ENCODE measurements at regions of chr6 and their contacts with region 1.

Region 1: GRCh38 chr6:32868257-32868788 is 14.3 kb downstream of the PSMB9 start:
- DNase-seq: peak; percentile 55 to 67
- H3K4me3 ChIP-seq: no peak overlapping the region
- H3K27ac ChIP-seq: no peak overlapping the region
- H3K4me1 ChIP-seq: no peaks in the 10 kb centered on the region
- H3K27me3 ChIP-seq: no peaks in the 10 kb centered on the region
- CTCF ChIP-seq: peak; percentile 95

Region 2: GRCh38 chr6:32244946-32245398 is 623.4 kb before region 1 on chr6:
- CTCF ChIA-PET with region 1: no interaction called
- POLR2A ChIA-PET with region 1: no interaction called
- intact Hi-C with region 1: no loop called
- DNase-seq: peak in 1 of 2 experiments; percentile 71
- H3K4me3 ChIP-seq: no peak overlapping the region
- H3K27ac ChIP-seq: no peak overlapping the region
- H3K4me1 ChIP-seq: no peaks in the 10 kb centered on the region
- H3K27me3 ChIP-seq: peaks cover 23% of the 10 kb centered on the region
- CTCF ChIP-seq: peak; percentile 95

Region 3: DNA sequence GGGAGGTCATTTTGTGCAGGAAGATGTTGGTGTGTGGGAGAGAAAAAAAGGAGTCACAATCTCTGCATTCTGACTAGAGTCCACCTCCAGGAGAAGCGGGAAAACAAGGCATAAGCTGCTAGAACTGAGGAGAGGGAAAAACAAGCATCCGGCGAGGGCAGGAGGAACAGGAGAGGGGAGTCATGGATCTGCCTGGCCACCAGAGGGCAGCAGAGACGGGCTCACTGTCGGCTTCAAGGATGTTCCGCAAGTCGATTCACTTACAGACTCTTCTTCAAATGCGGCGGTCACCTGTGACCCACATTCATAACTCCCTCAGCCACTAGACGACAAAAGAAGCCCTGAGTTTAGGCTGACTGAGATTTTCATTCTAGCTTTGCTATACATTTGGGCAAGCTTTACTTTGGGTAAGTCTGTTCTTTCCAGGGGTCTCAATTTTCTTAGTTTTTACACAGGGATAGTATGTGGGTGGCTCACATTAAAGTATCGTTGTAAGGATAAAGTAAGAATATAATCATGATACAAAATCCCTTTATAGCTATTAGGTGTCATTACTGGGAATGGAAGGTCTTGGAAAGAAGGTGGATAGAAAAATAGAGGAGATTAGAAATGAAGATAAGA is 454.8 kb before region 1 on chr6:
- CTCF ChIA-PET with region 1: no interaction called
- POLR2A ChIA-PET with region 1: no interaction called
- intact Hi-C with region 1: loop called (anchors 2 kb)
- DNase-seq: peak; percentile 38 to 75
- H3K4me3 ChIP-seq: no peak overlapping the region
- H3K27ac ChIP-seq: no peak overlapping the region
- H3K4me1 ChIP-seq: no peaks in the 10 kb centered on the region
- H3K27me3 ChIP-seq: peaks cover 44% of the 10 kb centered on the region
- CTCF ChIP-seq: peak; percentile 88

Region 4: GRCh38 chr6:32432050-32432450 is 436.3 kb before region 1 on chr6:
- CTCF ChIA-PET with region 1: no interaction called
- POLR2A ChIA-PET with region 1: no interaction called
- intact Hi-C with region 1: loop called (anchors 5 kb)
- DNase-seq: no peak
- H3K4me3 ChIP-seq: no peak overlapping the region
- H3K27ac ChIP-seq: no peak overlapping the region
- H3K4me1 ChIP-seq: no peaks in the 10 kb centered on the region
- H3K27me3 ChIP-seq: peaks cover 8% of the 10 kb centered on the region; the same call in 1 of the 2 replicates
- CTCF ChIP-seq: peak; percentile 69

Region 5: DNA sequence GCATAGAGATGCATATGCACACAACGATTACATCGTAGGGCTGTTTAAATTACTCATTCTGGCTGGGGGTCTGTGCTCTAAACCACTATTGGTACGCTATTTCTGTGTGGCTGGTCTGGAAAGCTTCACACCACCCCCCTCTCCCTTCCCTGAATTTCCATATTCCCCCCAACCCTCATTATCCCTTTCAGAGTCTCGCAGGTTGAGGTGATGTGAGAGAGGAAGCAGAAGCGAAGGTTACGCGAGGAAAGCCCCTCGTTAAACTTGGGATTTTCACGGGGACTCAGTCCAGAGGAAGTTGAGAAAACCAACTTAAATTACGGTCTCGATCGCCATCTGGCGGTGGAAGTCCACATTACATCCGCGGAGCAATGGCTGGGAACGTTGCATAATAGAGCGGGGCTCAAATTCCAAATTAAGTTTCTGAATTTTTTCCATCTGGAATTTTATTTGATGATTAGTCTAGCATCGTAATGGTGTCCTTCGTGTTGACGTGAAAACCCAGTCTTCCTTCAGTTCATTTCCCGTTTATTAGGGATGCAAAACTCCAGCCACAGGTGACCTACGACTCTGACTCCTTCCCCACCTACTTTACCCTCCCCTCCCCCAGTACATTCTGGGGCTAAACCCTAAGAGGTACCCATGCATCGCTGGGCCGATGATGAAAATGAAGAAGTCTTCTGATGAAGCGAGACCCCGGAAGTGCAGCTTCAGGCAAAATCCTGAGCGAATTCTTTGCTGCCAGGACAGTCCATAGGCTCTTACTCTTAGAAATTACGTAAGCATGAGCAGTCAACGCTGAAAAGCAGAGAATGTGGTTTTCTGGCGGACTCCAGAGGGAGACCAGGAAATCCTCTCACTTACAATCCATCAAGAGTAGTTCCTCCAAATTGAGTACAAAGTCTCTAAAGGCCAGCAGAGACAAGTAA is 71.2 kb before region 1 on chr6:
- CTCF ChIA-PET with region 1: interaction called, 4 read pairs
- POLR2A ChIA-PET with region 1: no interaction called
- intact Hi-C with region 1: loop called (anchors 10 kb)
- DNase-seq: peak; percentile 51 to 64
- H3K4me3 ChIP-seq: peak overlapping the region; percentile 30; the same call in 1 of the 2 replicates
- H3K27ac ChIP-seq: no peak overlapping the region
- H3K4me1 ChIP-seq: no peaks in the 10 kb centered on the region
- H3K27me3 ChIP-seq: peaks cover 35% of the 10 kb centered on the region
- CTCF ChIP-seq: peak; percentile 94

Region 6: GRCh38 chr6:32885698-32886286 is 17.5 kb after region 1 on chr6:
- CTCF ChIA-PET with region 1: no interaction called
- POLR2A ChIA-PET with region 1: interaction called, 21 read pairs
- intact Hi-C with region 1: loop called (anchors 1 kb)
- DNase-seq: peak in 1 of 2 experiments; percentile 54
- H3K4me3 ChIP-seq: no peak overlapping the region
- H3K27ac ChIP-seq: no peak overlapping the region
- H3K4me1 ChIP-seq: no peaks in the 10 kb centered on the region
- H3K27me3 ChIP-seq: 0 out of 2 replicates have a peak, but pooled peaks cover 7% of the 10 kb centered on the region
- CTCF ChIP-seq: peak; percentile 82

Region 7: DNA sequence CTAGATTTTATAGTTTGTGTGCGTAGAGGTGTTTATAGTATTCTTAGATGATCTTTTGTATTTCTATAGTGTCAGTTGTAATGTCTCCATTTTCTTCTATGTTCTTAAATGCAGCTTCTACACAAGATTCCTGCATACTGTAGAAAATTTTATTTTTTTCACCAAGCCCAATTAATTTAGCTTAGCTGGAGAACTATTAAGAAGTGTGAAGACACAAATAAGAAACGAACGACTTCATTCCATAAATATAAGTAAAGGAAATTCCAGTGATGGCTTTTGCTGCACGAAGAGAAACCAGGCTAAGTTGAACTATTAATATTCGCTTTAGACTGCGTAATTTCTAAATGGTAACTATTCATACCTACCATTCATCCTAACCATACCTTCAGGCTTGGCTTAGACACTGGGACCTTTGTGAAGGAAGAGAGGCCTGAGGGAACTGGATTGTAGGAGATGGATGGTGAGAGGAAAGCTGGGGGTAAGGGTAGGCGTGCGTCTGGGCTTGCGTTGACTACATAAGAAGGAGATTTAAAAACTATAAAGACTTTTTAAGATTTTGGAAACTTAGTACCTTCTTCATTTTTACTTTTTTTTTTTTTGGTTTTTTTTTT is 125.1 kb after region 1 on chr6:
- CTCF ChIA-PET with region 1: interaction called, 11 read pairs
- POLR2A ChIA-PET with region 1: no interaction called
- intact Hi-C with region 1: no loop called
- DNase-seq: no peak
- H3K4me3 ChIP-seq: no peak overlapping the region
- H3K27ac ChIP-seq: no peak overlapping the region
- H3K4me1 ChIP-seq: no peaks in the 10 kb centered on the region
- H3K27me3 ChIP-seq: peaks cover 58% of the 10 kb centered on the region
- CTCF ChIP-seq: no peak

Region 8: GRCh38 chr6:33356295-33356694 is 488.0 kb after region 1 on chr6:
- CTCF ChIA-PET with region 1: no interaction called
- POLR2A ChIA-PET with region 1: no interaction called
- intact Hi-C with region 1: no loop called
- DNase-seq: no peak
- H3K4me3 ChIP-seq: no peak overlapping the region
- H3K27ac ChIP-seq: no peak overlapping the region
- H3K4me1 ChIP-seq: peaks cover 11% of the 10 kb centered on the region
- H3K27me3 ChIP-seq: no peaks in the 10 kb centered on the region
- CTCF ChIP-seq: no peak